Aorta (tissue), 5 donors: ENCODE measurements at regions of chrX and their contacts with region 1.

Region 1: GRCh38 chrX:102599084-102599950 is at the start of gene ARMCX5:
- DNase-seq: peak; percentile 81
- ATAC-seq: peak; percentile 93
- H3K4me3 ChIP-seq: peak within 1 kb of the TSS; percentile 39 to 93
- H3K27ac ChIP-seq: peak within 1 kb of the TSS; percentile 23 to 97
- H3K4me1 ChIP-seq: no peaks in the 10 kb centered on the region
- H3K27me3 ChIP-seq: no peaks in the 10 kb centered on the region
- total RNA-seq, gene ARMCX5: 7.3 to 9.7 TPM

Region 2: DNA sequence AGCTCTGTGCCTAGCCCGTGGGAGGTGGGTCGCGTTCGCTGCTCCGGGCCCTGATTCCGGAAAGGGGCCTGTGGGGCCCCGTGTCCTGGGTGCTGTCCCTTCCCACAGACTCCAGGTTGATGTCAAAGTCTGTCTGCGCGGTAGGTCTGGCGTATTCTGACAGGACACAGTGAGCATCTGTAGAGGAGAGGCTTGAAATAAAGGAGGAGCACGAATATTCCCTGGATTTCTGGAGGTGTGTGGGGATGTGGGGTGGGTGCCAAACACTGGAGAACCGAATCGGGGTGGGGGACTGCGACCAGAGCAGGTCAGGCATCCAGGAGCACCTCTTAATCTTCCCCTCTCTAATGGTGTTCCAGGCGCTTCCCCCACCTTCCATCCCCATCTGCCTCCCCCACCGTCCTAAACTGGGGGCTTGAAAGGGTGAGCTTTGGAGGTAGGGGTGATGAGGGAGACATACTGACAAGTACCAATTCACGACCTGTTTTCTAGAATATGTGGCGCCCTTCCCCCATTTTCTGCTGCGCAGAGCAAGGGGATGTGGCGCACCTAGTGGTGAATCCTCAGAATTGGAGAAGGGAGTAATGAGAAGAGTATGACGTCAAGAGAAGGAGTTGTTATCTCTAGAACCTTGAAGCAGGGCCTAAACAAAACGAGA is 52.8 kb after region 1 on chrX:
- intact Hi-C with region 1: loop called in 1 of 2 experiments (anchors 1 kb)
- DNase-seq: peak; percentile 57 to 73
- ATAC-seq: peak; percentile 72
- H3K4me3 ChIP-seq: peak overlapping the region; percentile 32 to 69
- H3K27ac ChIP-seq: peak overlapping the region in 1 of 2 donors; percentile 26
- H3K4me1 ChIP-seq: no peaks in the 10 kb centered on the region
- H3K27me3 ChIP-seq: no peaks in the 10 kb centered on the region

Region 3: GRCh38 chrX:102863735-102864134 is 264.4 kb after region 1 on chrX:
- intact Hi-C with region 1: loop called in 1 of 2 experiments (anchors 10 kb)
- DNase-seq: peak; percentile 86 to 94
- ATAC-seq: peak; percentile 91
- H3K4me3 ChIP-seq: no peak overlapping the region
- H3K27ac ChIP-seq: no peak overlapping the region
- H3K4me1 ChIP-seq: no peaks in the 10 kb centered on the region
- H3K27me3 ChIP-seq: no peaks in the 10 kb centered on the region

Region 4: DNA sequence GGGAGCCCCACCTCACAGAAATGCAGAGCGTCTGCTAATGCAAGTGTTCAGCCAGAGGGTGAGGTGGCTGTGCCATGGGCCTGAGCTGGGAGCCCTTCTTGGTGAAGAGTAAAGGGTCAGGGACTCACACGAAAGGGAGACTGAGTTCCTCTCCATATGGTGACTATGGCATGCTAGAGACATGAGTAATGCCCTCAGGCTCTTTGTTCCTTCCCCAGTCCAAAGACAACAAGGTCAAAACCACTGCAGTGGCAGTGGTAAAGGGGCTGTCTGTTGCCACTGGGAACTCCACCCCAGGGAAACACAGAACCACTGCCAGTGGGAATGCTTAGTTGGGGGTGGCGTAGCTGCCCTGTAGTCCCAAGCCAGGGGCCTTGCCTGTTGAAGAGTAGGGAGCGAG is 360.2 kb after region 1 on chrX:
- intact Hi-C with region 1: no loop called
- DNase-seq: no peak
- ATAC-seq: no peak
- H3K4me3 ChIP-seq: no peak overlapping the region
- H3K27ac ChIP-seq: no peak overlapping the region
- H3K4me1 ChIP-seq: no peaks in the 10 kb centered on the region
- H3K27me3 ChIP-seq: no peaks in the 10 kb centered on the region

Region 5: DNA sequence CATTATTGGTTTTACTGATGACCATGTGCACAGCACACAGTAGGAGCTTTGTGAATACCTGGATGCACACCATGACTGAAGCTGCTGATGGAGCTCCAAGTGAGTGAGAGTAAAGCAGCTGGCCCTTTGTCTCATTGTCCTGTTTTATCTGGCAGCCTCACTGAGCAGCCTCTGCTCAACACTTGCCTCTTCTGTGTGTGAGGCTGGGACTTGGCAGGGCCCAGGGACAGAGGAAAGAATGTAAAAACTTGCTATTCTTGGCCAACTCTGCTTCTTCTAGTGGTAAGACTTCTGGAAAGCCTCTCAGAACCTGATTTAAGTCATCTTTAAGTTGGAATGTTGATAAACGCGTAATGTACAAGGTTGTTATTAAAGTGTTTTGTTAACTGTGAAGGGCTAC is 403.3 kb after region 1 on chrX:
- intact Hi-C with region 1: no loop called
- DNase-seq: no peak
- ATAC-seq: no peak
- H3K4me3 ChIP-seq: no peak overlapping the region
- H3K27ac ChIP-seq: no peak overlapping the region
- H3K4me1 ChIP-seq: no peaks in the 10 kb centered on the region
- H3K27me3 ChIP-seq: no peaks in the 10 kb centered on the region

Region 6: DNA sequence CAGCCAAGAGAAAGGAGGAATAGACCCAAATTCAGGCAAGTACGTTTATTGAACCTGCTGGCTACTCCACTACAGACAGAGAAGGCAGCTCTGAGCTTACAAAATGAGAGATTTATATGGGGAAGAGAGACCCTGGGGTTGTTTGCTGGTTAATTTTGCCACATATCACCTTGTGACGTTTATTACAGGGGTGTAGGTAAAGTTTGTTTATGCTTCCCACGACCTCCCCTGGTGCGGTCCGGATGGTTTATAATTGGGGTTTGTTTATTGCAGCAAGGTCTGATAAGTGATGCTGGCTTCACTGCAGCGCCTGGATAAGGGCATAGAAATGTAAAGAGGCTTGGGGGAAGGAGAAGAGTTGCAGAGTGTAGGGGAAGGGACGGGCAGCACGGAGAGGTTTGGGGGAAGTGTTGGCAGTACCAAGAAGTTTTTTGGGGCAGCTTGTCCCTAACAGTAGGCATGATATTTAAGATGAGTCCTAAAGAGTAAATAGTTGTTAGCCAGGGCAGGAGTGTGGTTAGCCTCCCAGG is 452.0 kb after region 1 on chrX:
- intact Hi-C with region 1: no loop called
- DNase-seq: no peak
- ATAC-seq: no peak
- H3K4me3 ChIP-seq: no peak overlapping the region
- H3K27ac ChIP-seq: no peak overlapping the region
- H3K4me1 ChIP-seq: no peaks in the 10 kb centered on the region
- H3K27me3 ChIP-seq: no peaks in the 10 kb centered on the region